ENCODE measurements at regions of chr6 and their contacts with region 1.

Region 1: GRCh38 chr6:168221000-168221399 is 98.6 kb downstream of the DACT2 start:
- DNase-seq: peak; percentile 7
- H3K4me3 ChIP-seq: no peak overlapping the region
- H3K27ac ChIP-seq: no peak overlapping the region
- H3K4me1 ChIP-seq: no peaks in the 10 kb centered on the region
- H3K27me3 ChIP-seq: no peaks in the 10 kb centered on the region
- CTCF ChIP-seq: no peak

Region 2: DNA sequence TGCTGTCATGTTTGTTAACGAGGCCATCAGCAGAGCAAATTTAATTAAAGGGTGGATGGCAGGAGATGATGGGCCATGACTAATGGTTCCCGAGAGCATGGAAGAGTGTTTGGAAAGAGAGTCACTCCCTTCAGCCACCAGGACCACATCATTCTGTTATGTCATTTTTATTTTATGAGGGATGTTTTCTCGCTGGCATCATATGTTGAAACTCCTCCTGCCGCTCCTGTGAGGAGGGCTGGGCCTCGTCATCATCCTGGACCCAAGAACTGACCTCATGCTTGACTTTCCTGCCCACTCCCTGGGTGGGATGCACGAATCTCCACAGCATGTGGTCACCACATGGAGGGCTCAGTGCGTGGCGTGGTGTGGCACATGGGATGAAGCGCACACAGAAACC is 55.6 kb before region 1 on chr6:
- CTCF ChIA-PET with region 1: no interaction called
- dilution Hi-C with region 1: loop called (anchors 5 kb)
- in situ Hi-C with region 1: no loop called
- intact Hi-C with region 1: no loop called
- DNase-seq: no peak
- H3K4me3 ChIP-seq: no peak overlapping the region
- H3K27ac ChIP-seq: no peak overlapping the region
- H3K4me1 ChIP-seq: no peaks in the 10 kb centered on the region
- H3K27me3 ChIP-seq: no peaks in the 10 kb centered on the region
- CTCF ChIP-seq: no peak

Region 3: DNA sequence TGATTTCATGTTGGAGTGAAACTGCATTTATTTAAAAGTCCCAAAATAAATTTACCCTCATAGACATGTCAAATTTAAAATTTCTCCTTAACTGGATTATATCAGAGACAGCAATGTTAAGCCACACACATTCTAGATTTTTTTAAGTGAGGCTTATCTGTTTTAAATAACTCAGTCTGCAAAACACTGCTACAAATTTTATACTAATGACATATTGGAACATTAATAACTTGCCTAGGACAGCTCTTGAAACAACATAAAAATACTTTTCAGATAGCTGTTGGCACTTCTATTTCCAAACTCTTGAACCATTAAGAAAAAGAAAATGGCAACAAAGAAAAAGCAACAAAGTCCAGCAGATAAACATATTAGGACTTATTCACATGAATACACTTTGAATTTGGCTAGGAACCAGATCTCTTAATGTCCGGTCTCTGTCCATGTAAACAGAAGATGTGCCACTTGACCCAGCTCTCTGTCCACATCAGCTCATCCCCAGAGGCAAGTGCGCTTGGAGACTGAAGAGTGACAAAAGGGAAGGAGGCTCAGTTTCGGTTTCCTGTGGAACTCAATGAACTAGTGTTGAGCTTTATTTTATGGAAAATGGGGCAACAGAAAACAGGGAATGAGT is 1251.9 kb after region 1 on chr6:
- CTCF ChIA-PET with region 1: no interaction called
- dilution Hi-C with region 1: no loop called
- in situ Hi-C with region 1: no loop called
- intact Hi-C with region 1: no loop called
- DNase-seq: no peak
- H3K4me3 ChIP-seq: no peak overlapping the region
- H3K27ac ChIP-seq: no peak overlapping the region
- H3K4me1 ChIP-seq: no peaks in the 10 kb centered on the region
- H3K27me3 ChIP-seq: no peaks in the 10 kb centered on the region
- CTCF ChIP-seq: no peak